ENCODE measurements at regions of chr4 and their contacts with region 1.

Region 1: DNA sequence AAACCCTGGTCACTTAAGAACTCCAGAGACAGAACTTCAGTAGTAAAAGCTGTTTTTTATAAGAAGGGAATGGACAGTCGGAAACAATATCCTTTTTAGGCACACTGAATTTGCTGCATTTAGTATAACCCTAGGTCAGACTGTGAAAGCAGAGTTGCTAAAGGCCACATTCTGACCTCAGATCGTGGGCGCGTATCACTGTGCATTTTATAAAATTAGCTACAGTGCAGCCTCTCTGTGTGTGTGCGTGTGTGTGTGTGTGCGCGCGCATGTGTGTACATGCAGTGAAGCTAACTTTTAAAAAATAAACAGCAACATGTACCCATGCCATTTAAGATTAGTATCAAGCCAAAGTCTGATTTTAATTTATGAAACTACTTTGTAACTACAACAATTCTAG is 8.0 kb downstream of the ZNF827 start:
- DNase-seq: no peak
- ATAC-seq: peak; percentile 15; the same call in 2 of the 3 replicates
- H3K4me3 ChIP-seq: peak overlapping the region; percentile 2; the same call in 1 of the 2 replicates
- H3K27ac ChIP-seq: peak overlapping the region; percentile 59
- H3K4me1 ChIP-seq: peaks cover 18% of the 10 kb centered on the region; the same call in 1 of the 2 replicates
- H3K27me3 ChIP-seq: no peaks in the 10 kb centered on the region
- CTCF ChIP-seq: no peak
- EP300 ChIP-seq: no peak
- POLR2A ChIP-seq: no peak
- RAD21 ChIP-seq: no peak

Region 2: GRCh38 chr4:145868637-145869409 is 61.8 kb before region 1 on chr4:
- CTCF ChIA-PET with region 1: no interaction called
- POLR2A ChIA-PET with region 1: interaction called, 3 read pairs
- RAD21 ChIA-PET with region 1: interaction called, 4 read pairs
- SMC1A ChIA-PET with region 1: interaction called, 14 read pairs
- in situ Hi-C with region 1: no loop called
- intact Hi-C with region 1: no loop called
- DNase-seq: no peak
- ATAC-seq: peak; percentile 80
- H3K4me3 ChIP-seq: no peak overlapping the region
- H3K27ac ChIP-seq: no peak overlapping the region; the same call in 1 of the 2 replicates
- H3K4me1 ChIP-seq: peaks cover 45% of the 10 kb centered on the region
- H3K27me3 ChIP-seq: no peaks in the 10 kb centered on the region
- CTCF ChIP-seq: peak in 2 of 3 experiments; percentile 8 to 19; a peak in 2 of 6 replicates
- EP300 ChIP-seq: no peak
- POLR2A ChIP-seq: no peak
- RAD21 ChIP-seq: peak; percentile 14; the same call in 1 of the 2 replicates

Region 3: GRCh38 chr4:145887241-145887991 is 43.2 kb before region 1 on chr4:
- CTCF ChIA-PET with region 1: interaction called, 3 read pairs
- POLR2A ChIA-PET with region 1: interaction called, 10 read pairs
- RAD21 ChIA-PET with region 1: interaction called, 10 read pairs
- SMC1A ChIA-PET with region 1: interaction called, 12 read pairs
- in situ Hi-C with region 1: no loop called
- intact Hi-C with region 1: loop called (anchors 5 kb)
- DNase-seq: no peak
- ATAC-seq: peak; percentile 74
- H3K4me3 ChIP-seq: no peak overlapping the region
- H3K27ac ChIP-seq: peak overlapping the region; percentile 17
- H3K4me1 ChIP-seq: peaks cover 39% of the 10 kb centered on the region
- H3K27me3 ChIP-seq: no peaks in the 10 kb centered on the region
- CTCF ChIP-seq: no peak; a peak in 1 of 6 replicates
- EP300 ChIP-seq: no peak
- POLR2A ChIP-seq: no peak
- RAD21 ChIP-seq: 0 out of 2 replicates have a peak, but pooled peaks have one; percentile 14

Region 4: DNA sequence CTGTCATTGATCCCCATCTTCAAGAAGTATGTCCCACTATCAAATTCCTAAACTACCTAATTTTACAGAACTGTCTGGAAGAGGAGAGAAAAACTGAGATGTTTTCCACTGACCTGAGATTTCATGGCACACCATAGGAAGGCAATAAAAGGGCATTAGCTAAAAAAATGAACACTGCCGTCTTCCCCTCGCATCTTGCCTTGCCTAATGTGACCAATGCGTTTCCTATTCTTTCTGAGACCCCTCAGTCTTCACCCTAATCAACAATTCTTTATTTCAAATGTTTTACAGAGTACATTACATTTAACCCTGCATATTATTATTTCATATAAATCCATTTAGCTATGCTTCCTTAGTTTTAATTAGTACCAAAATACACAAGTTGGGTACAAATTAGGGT is 35.5 kb before region 1 on chr4:
- CTCF ChIA-PET with region 1: interaction called, 5 read pairs
- POLR2A ChIA-PET with region 1: interaction called, 4 read pairs
- RAD21 ChIA-PET with region 1: interaction called, 6 read pairs
- SMC1A ChIA-PET with region 1: interaction called, 20 read pairs
- in situ Hi-C with region 1: no loop called
- intact Hi-C with region 1: no loop called
- DNase-seq: no peak
- ATAC-seq: no peak
- H3K4me3 ChIP-seq: no peak overlapping the region
- H3K27ac ChIP-seq: no peak overlapping the region
- H3K4me1 ChIP-seq: peaks cover 9% of the 10 kb centered on the region
- H3K27me3 ChIP-seq: no peaks in the 10 kb centered on the region
- CTCF ChIP-seq: no peak
- EP300 ChIP-seq: no peak
- POLR2A ChIP-seq: no peak
- RAD21 ChIP-seq: no peak

Region 5: DNA sequence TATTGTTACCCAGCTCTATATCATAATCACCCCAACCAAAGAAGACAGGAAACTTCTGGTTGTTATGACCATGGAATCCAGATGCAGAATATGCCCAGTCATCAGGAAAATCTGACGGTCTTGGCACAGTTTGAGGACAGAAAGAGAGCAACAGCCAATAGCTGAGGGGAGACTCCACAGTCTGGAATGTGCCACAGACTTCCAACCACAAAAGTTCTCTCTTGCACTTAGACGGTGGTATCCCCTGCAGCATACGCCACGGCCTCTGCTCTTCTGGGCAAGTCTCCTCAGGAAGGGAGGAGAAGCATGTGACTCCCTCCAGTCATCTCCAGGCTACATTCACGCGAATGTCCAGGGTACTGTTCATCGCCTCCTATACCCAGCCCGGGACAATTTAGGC is 10.4 kb before region 1 on chr4:
- CTCF ChIA-PET with region 1: interaction called, 3 read pairs
- POLR2A ChIA-PET with region 1: interaction called, 7 read pairs
- RAD21 ChIA-PET with region 1: interaction called, 6 read pairs
- SMC1A ChIA-PET with region 1: interaction called, 13 read pairs
- in situ Hi-C with region 1: no loop called
- intact Hi-C with region 1: no loop called
- DNase-seq: no peak
- ATAC-seq: no peak
- H3K4me3 ChIP-seq: no peak overlapping the region
- H3K27ac ChIP-seq: no peak overlapping the region
- H3K4me1 ChIP-seq: no peaks in the 10 kb centered on the region
- H3K27me3 ChIP-seq: no peaks in the 10 kb centered on the region
- CTCF ChIP-seq: no peak
- EP300 ChIP-seq: no peak
- POLR2A ChIP-seq: no peak
- RAD21 ChIP-seq: no peak